ENCODE measurements at regions of chr14 and their contacts with region 1.

Region 1: GRCh38 chr14:75709207-75709812 is 48.3 kb downstream of the TTLL5 start:
- DNase-seq: peak; percentile 77
- ATAC-seq: peak; percentile 67
- H3K4me3 Mint-ChIP-seq: no peak overlapping the region
- H3K27ac Mint-ChIP-seq: no peak overlapping the region
- H3K4me1 Mint-ChIP-seq: peaks cover 4% of the 10 kb centered on the region
- H3K27me3 Mint-ChIP-seq: no peaks in the 10 kb centered on the region

Region 2: DNA sequence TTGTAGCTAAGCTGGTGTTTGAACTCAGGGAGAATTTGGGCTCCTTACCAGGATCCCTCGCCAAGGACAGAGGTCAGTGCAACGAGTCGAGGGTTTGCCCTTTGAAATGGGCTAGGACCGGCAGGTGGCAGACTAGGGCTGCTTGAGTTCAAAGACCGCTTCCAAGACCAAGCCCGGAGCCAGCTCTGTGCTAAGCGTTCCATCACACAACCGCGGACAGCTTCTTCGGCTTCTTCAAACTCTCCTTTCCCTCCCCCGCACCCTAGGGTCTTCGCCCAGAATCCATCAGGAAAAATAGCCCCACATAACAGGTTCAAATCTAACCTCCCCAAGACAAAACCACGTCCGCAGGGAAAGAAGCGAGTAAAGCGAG is 131.6 kb before region 1 on chr14:
- CTCF ChIA-PET with region 1: interaction called, 13 read pairs
- POLR2A ChIA-PET with region 1: no interaction called
- intact Hi-C with region 1: no loop called
- DNase-seq: peak; percentile 89
- ATAC-seq: peak; percentile 90
- H3K4me3 Mint-ChIP-seq: peak overlapping the region; percentile 74
- H3K27ac Mint-ChIP-seq: peak overlapping the region; percentile 74
- H3K4me1 Mint-ChIP-seq: peaks cover 22% of the 10 kb centered on the region
- H3K27me3 Mint-ChIP-seq: no peaks in the 10 kb centered on the region

Region 3: DNA sequence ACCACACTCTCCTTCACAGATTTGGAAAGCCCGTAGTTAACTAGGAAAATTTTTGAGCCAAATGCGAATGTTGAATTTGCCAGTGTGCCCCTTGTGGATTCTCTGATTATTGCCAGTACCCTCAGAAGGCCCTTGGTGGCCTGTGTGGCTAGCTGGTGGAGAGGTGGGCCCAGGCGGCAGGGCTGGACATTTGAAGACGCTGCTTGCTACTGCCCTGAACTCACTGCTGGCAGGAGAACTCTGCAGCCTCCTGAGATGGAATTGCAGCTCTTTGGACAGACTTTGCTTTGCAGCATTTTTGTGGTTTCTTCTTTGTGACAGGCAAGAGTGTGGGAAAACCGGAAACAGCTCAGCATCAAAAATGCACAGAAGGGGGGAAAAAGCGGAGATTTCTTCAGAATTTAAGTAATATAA is 174.9 kb after region 1 on chr14:
- CTCF ChIA-PET with region 1: interaction called, 4 read pairs
- POLR2A ChIA-PET with region 1: no interaction called
- intact Hi-C with region 1: loop called in 1 of 2 experiments (anchors 5 kb)
- DNase-seq: no peak
- ATAC-seq: no peak
- H3K4me3 Mint-ChIP-seq: no peak overlapping the region
- H3K27ac Mint-ChIP-seq: no peak overlapping the region
- H3K4me1 Mint-ChIP-seq: peaks cover 7% of the 10 kb centered on the region
- H3K27me3 Mint-ChIP-seq: no peaks in the 10 kb centered on the region

Region 4: GRCh38 chr14:75982266-75983018 is 273.1 kb after region 1 on chr14:
- CTCF ChIA-PET with region 1: interaction called, 91 read pairs
- POLR2A ChIA-PET with region 1: no interaction called
- intact Hi-C with region 1: loop called (anchors 1 kb)
- DNase-seq: peak; percentile 86
- ATAC-seq: peak; percentile 62
- H3K4me3 Mint-ChIP-seq: peak overlapping the region; percentile 67
- H3K27ac Mint-ChIP-seq: peak overlapping the region; percentile 78
- H3K4me1 Mint-ChIP-seq: peaks cover 42% of the 10 kb centered on the region
- H3K27me3 Mint-ChIP-seq: no peaks in the 10 kb centered on the region

Region 5: DNA sequence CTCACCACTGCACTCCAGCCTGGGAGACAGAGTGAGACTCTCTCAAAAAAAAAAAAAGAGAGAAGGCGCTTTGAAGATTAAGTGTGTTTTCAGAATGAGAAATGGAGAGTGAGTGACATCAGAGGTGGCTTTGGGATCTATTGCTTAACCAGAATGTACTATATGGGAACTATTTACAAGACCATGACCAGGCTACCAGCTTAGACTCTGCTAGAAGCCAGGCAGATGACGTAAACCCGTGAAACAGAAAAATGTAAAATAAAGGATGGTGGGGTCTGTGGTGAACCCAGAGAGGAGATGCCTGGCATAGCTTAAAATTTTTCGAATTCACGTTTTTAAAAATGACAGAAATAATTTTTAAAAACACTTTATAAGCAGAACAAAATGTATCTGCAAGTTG is 358.2 kb after region 1 on chr14:
- CTCF ChIA-PET with region 1: no interaction called
- POLR2A ChIA-PET with region 1: no interaction called
- intact Hi-C with region 1: no loop called
- DNase-seq: no peak
- ATAC-seq: no peak
- H3K4me3 Mint-ChIP-seq: no peak overlapping the region
- H3K27ac Mint-ChIP-seq: no peak overlapping the region
- H3K4me1 Mint-ChIP-seq: no peaks in the 10 kb centered on the region
- H3K27me3 Mint-ChIP-seq: no peaks in the 10 kb centered on the region

Region 6: DNA sequence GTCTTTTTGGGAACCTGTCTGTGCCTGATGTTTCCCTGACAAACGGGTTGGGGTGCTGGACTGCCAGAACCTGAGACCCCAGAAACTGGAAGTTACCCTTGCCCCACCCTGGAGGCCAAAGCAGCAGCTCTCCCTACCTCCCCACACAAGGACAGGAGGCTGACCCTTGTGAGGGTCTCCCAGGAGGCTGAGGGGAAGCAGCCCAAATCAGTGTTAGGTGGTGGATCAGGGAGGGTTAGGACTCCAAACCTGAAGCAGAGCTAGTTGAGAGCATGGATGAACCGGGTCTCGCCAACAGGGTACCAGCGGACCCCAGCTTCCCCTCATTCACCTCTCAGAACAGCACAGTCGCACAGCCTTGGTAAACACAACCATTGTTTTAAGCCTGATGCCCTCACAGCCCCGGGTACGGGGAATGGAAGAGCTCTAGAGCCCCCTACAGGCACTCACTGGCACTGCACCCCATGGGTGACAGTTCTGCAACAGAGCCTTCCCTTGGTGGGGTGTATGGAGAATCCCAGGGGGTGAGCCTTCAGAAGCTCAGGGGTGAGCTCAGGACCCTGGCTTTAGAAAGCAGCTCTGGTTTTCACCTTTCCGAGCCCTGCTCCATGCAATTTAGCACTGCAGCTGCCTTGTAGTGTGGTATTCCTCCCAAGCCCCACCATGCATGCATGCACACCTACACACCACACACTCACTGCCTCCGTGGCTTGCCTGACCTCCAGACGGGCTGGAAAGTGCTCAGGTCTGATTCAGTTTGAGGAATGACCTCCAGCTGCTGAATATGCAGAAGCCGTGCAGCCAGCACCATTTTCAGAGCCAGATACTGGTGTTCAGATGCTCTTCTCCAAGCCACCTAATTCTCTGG is 677.8 kb after region 1 on chr14:
- CTCF ChIA-PET with region 1: no interaction called
- POLR2A ChIA-PET with region 1: no interaction called
- intact Hi-C with region 1: loop called in 1 of 2 experiments (anchors 1 kb)
- DNase-seq: peak; percentile 83
- ATAC-seq: peak; percentile 90
- H3K4me3 Mint-ChIP-seq: no peak overlapping the region
- H3K27ac Mint-ChIP-seq: no peak overlapping the region
- H3K4me1 Mint-ChIP-seq: no peaks in the 10 kb centered on the region
- H3K27me3 Mint-ChIP-seq: peaks cover 37% of the 10 kb centered on the region